ENCODE measurements at regions of chr2 and their contacts with region 1.

Region 1: GRCh38 chr2:201795607-201796477 is 10.5 kb upstream of the CDK15 start:
- DNase-seq: peak; percentile 35
- ATAC-seq: peak; percentile 80
- H3K4me3 ChIP-seq: no peak overlapping the region
- H3K27ac ChIP-seq: no peak overlapping the region
- H3K4me1 ChIP-seq: peaks cover 0 to 20% of the 10 kb centered on the region in 2 experiments; a peak in 2 of 4 replicates
- H3K27me3 ChIP-seq: no peaks in the 10 kb centered on the region
- CTCF ChIP-seq: peak; percentile 60 to 73 (median 73); a peak in 5 of 6 replicates
- POLR2A ChIP-seq: no peak
- RAD21 ChIP-seq: peak; percentile 87

Region 2: DNA sequence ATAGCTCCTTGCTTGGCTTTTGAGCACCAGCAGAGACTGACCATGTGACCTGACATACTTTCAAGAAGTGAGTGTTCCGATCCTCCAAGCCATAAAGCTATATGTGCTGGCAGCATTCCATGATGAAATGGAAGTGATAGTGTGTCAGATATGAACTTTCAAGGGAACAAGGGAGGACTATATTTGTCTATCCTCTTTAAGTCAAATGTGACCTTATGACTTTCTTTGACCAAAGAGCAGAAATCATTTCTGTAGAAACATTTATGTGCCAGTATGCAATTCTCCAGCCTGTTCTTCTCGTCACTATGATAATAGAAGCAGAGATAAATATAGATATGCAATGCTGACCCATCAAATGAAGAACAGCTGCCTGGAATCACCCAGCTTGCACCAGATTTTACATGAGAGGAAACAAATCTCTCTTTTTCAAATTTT is 738.7 kb before region 1 on chr2:
- CTCF ChIA-PET with region 1: no interaction called
- POLR2A ChIA-PET with region 1: no interaction called
- RAD21 ChIA-PET with region 1: no interaction called
- intact Hi-C with region 1: no loop called
- DNase-seq: no peak
- ATAC-seq: no peak
- H3K4me3 ChIP-seq: no peak overlapping the region
- H3K27ac ChIP-seq: no peak overlapping the region
- H3K4me1 ChIP-seq: no peaks in the 10 kb centered on the region
- H3K27me3 ChIP-seq: no peaks in the 10 kb centered on the region
- CTCF ChIP-seq: no peak
- POLR2A ChIP-seq: no peak
- RAD21 ChIP-seq: no peak

Region 3: DNA sequence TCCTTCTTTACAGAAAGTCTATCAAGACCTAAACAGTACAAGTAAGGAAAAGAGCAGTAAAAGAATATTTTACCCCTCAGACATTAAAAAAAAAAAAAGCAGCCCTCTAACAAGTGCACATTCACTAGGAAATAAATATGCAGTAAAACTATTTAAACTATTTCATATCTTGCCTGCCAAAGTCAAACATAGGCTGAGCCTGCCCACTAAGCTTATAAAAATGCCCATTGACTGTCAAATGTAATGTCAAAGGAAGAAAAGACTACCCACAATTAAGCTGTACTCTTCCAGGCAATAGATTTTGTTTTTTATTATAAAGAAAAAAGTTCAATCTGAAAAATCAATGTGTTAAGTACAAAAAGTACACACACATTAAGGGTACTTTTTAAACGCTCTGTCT is 26.9 kb before region 1 on chr2:
- CTCF ChIA-PET with region 1: no interaction called
- POLR2A ChIA-PET with region 1: no interaction called
- RAD21 ChIA-PET with region 1: no interaction called
- intact Hi-C with region 1: no loop called
- DNase-seq: no peak
- ATAC-seq: no peak
- H3K4me3 ChIP-seq: no peak overlapping the region
- H3K27ac ChIP-seq: no peak overlapping the region
- H3K4me1 ChIP-seq: no peaks in the 10 kb centered on the region
- H3K27me3 ChIP-seq: no peaks in the 10 kb centered on the region
- CTCF ChIP-seq: no peak
- POLR2A ChIP-seq: no peak
- RAD21 ChIP-seq: no peak

Region 4: DNA sequence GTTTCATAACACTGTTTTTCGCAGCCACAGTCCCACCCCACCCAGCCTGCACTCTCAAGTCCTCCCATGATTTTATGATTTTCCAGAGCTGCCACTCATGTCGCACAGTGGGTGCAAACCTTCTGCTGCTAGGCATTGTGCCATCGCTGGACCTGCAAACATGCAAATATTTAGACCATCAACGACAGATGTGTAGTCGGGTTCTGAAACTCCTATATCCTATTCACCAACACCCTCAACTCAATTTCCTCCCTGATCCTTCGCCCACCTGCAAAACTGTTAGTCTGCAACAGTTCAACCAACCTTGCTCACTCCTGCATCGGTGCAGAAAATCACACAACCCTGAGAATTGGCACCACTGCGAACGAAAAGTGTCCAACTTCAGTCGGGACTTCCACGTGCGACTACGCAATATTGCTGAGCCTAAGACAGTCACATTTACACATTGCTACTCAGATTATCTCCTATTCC is 14.2 kb before region 1 on chr2:
- CTCF ChIA-PET with region 1: interaction called, 5 read pairs
- POLR2A ChIA-PET with region 1: no interaction called
- RAD21 ChIA-PET with region 1: no interaction called
- intact Hi-C with region 1: loop called (anchors 1 kb)
- DNase-seq: no peak
- ATAC-seq: peak; percentile 3
- H3K4me3 ChIP-seq: peak overlapping the region; percentile 91 to 97
- H3K27ac ChIP-seq: no peak overlapping the region; the same call in 1 of the 2 replicates
- H3K4me1 ChIP-seq: peaks cover 11 to 31% of the 10 kb centered on the region in 2 experiments
- H3K27me3 ChIP-seq: no peaks in the 10 kb centered on the region
- CTCF ChIP-seq: no peak
- POLR2A ChIP-seq: no peak
- RAD21 ChIP-seq: no peak

Region 5: DNA sequence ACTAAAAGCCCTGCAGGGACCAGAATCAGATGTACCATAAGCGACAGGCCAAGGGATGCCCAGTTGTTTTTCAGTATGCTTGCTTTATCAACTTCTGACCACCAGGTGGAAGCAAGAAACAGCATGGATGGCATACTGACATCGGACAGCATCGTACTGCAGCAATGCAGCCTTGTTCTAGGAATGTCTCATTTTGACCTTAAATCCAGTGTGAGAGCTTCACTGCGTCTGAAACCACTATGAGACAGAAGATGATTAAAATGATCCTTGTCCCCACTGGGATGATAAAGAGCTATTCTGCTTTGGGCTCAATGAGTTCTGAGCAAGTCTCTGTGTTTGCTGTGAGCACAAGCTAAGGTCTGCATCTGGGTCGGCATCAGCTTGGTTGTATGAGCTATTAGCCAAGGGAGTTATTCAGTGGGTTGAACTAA is 64.8 kb after region 1 on chr2:
- CTCF ChIA-PET with region 1: no interaction called
- POLR2A ChIA-PET with region 1: no interaction called
- RAD21 ChIA-PET with region 1: no interaction called
- intact Hi-C with region 1: loop called (anchors 1 kb)
- DNase-seq: peak; percentile 56
- ATAC-seq: peak; percentile 99
- H3K4me3 ChIP-seq: no peak overlapping the region
- H3K27ac ChIP-seq: no peak overlapping the region
- H3K4me1 ChIP-seq: peaks cover 0 to 4% of the 10 kb centered on the region in 2 experiments; a peak in 1 of 4 replicates
- H3K27me3 ChIP-seq: no peaks in the 10 kb centered on the region
- CTCF ChIP-seq: peak; percentile 80 to 82 (median 81)
- POLR2A ChIP-seq: no peak
- RAD21 ChIP-seq: peak; percentile 95

Region 6: DNA sequence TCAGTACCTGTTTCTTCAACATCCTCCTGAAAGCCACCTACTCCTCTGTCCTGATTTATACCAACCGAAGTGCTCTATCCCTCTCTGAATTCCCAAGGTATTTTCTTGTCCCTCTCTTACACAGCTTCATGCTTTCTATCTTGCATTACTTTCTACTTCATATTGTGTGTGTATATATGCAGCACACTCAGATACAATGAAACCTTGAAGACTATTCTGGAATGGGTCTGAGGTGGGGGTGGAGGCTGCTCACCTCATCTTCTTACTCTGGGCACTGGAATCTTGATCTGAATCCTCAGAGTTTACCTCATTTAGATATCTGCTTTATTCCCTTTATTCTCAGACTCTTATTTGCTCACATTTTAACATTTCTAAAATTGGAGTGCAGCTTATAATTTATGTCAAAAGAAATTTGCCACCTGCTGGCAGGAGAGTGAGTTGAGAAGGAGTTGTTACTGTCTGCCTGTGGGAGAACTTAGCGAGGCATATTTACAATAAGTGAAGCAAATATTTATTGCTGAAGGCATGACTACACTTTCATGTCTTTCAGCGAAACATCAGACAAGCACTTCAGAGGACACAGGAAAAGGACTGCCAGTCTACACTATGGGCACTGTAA is 260.7 kb after region 1 on chr2:
- CTCF ChIA-PET with region 1: no interaction called
- POLR2A ChIA-PET with region 1: no interaction called
- RAD21 ChIA-PET with region 1: no interaction called
- intact Hi-C with region 1: loop called (anchors 10 kb)
- DNase-seq: no peak
- ATAC-seq: peak; percentile 67; the same call in 1 of the 2 replicates
- H3K4me3 ChIP-seq: no peak overlapping the region
- H3K27ac ChIP-seq: no peak overlapping the region
- H3K4me1 ChIP-seq: no peaks in the 10 kb centered on the region
- H3K27me3 ChIP-seq: peaks cover 4% of the 10 kb centered on the region; the same call in 1 of the 2 replicates
- CTCF ChIP-seq: peak; percentile 35 to 48 (median 42); a peak in 4 of 6 replicates
- POLR2A ChIP-seq: no peak
- RAD21 ChIP-seq: peak; percentile 55

Region 7: GRCh38 chr2:202265467-202266277 is 469.8 kb after region 1 on chr2 and contains the start of gene NOP58:
- CTCF ChIA-PET with region 1: no interaction called
- POLR2A ChIA-PET with region 1: no interaction called
- RAD21 ChIA-PET with region 1: no interaction called
- intact Hi-C with region 1: loop called (anchors 5 kb)
- DNase-seq: peak; percentile 92
- ATAC-seq: peak; percentile 91
- H3K4me3 ChIP-seq: peak within 1 kb of the TSS; percentile 80 to 100
- H3K27ac ChIP-seq: peak within 1 kb of the TSS; percentile 89
- H3K4me1 ChIP-seq: peaks cover 14 to 30% of the 10 kb centered on the region in 2 experiments
- H3K27me3 ChIP-seq: no peaks in the 10 kb centered on the region
- CTCF ChIP-seq: no peak
- POLR2A ChIP-seq: peak; percentile 94
- RAD21 ChIP-seq: no peak
- total RNA-seq, gene NOP58: 136 TPM